ENCODE measurements at regions of chr4 and their contacts with region 1.

Region 1: GRCh38 chr4:81069706-81070331 is 39.3 kb downstream of the BMP3 start:
- DNase-seq: peak; percentile 66 to 93
- H3K4me3 ChIP-seq: no peak overlapping the region
- H3K27ac ChIP-seq: no peak overlapping the region
- H3K4me1 ChIP-seq: no peaks in the 10 kb centered on the region
- H3K27me3 ChIP-seq: no peaks in the 10 kb centered on the region
- CTCF ChIP-seq: peak in 5 of 7 experiments; percentile 66 to 86 (median 85)
- EP300 ChIP-seq: no peak
- POLR2A ChIP-seq: no peak

Region 2: DNA sequence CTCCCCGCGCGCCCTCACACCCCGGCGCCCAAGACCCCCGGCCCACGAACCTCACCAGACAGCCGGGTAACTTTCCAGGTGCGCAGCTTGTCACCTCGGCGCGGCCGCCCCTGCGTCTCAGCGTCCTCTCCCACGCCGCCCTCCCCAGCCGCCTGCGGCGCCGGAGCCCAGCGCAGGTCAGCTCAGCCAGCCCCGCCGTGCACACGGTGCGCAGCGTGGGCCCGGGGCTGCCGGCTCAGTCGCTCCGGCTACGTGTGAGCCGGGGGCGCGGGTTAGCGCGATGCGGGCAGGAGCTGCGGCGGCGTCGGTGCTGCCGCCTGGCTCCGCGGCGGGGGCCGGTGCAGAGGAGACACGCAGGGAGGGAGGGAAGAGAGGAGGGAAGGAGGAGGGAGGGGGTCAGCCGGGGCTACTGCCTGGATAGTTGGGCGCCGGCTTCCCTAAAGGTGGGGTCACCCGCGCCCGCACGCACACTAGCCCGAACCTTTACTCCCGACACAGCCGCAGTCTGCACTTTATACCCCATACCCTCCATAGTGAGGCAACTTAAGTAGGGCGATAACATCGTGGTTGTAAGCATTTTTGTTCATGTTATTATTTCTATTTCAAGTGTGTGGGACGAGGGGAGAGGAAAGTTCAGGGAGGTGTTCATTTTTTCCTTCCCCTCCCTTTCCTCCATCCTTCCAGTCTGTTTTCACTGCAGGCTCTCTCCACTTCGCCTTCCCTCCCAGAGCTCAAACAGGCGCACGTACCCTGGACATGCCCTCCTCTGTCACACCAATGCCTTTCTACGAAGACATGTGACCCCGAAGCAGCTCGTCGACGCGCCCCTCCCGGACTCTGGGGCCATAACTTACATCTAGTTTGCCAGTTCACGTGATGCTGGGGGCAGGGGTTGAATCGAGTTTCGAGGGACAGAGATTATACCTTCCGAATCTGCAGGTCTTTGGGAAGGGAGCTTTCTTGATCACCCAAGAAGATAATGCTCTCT is 145.4 kb after region 1 on chr4 and contains the start of gene PRKG2:
- intact Hi-C with region 1: no loop called
- DNase-seq: peak in 1 of 2 donors; percentile 57
- H3K4me3 ChIP-seq: peak within 1 kb of the TSS; percentile 36 to 53 (median 46)
- H3K27ac ChIP-seq: no peak within 1 kb of the TSS
- H3K4me1 ChIP-seq: peaks cover 0 to 21% (median 14%) of the 10 kb centered on the region in 4 donors
- H3K27me3 ChIP-seq: peaks cover 10 to 69% (median 28%) of the 10 kb centered on the region in 3 donors
- CTCF ChIP-seq: no peak
- EP300 ChIP-seq: no peak
- POLR2A ChIP-seq: no peak
- total RNA-seq, gene PRKG2: 0.58 to 2.9 TPM in 2 of 5 donors, not detected in the others

Region 3: DNA sequence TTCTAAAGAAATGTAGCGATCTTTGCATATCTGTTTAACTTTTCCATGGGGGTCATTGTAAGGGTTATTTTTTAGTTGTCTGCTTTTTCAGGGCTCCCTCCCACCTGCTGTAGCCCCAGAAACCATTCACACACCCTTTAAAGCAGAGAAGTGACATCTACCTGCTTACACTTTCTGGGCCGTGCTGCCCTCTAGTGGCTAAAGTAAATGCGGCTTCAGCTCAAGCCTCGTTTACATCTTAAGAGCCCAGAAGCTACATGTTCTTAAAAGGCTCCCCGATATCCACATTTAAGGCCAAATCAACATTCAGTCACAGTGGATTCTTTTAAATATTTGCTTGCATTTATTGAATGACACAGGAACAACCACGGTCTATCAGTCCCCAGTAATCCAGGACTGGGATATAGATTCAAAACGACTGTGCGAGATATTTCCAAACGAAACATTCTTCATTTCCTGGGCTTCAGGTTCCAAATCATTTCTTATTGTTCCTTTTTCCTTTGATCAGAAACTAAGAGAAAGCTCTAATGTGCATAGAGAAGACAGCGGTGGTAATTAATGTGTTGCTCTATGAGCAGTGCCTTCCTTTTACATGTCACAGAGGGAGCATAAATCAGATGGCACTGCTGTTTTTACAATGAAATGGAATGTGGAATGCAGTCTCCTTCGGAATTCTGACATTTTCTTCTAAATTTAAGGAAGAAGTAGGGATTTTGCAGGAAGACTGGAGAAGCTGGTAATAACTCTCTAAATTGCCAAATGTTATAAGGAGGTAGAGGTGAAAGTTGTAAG is 282.0 kb after region 1 on chr4:
- intact Hi-C with region 1: loop called (anchors 10 kb)
- DNase-seq: peak; percentile 79 to 91
- H3K4me3 ChIP-seq: no peak overlapping the region
- H3K27ac ChIP-seq: no peak overlapping the region
- H3K4me1 ChIP-seq: peaks cover 0 to 6% (median 3%) of the 10 kb centered on the region in 4 donors
- H3K27me3 ChIP-seq: no peaks in the 10 kb centered on the region
- CTCF ChIP-seq: peak in 5 of 7 experiments; percentile 46 to 88 (median 79)
- EP300 ChIP-seq: no peak
- POLR2A ChIP-seq: no peak